MCF 10A (cell line): ENCODE measurements at regions of chr1 and their contacts with region 1.

Region 1: GRCh38 chr1:172507741-172508140 is 25.2 kb upstream of the SUCO start:
- DNase-seq: no peak
- H3K4me3 Mint-ChIP-seq: no peak overlapping the region
- H3K27ac Mint-ChIP-seq: no peak overlapping the region
- H3K4me1 Mint-ChIP-seq: no peaks in the 10 kb centered on the region
- H3K27me3 Mint-ChIP-seq: no peaks in the 10 kb centered on the region
- CTCF ChIP-seq: no peak

Region 2: DNA sequence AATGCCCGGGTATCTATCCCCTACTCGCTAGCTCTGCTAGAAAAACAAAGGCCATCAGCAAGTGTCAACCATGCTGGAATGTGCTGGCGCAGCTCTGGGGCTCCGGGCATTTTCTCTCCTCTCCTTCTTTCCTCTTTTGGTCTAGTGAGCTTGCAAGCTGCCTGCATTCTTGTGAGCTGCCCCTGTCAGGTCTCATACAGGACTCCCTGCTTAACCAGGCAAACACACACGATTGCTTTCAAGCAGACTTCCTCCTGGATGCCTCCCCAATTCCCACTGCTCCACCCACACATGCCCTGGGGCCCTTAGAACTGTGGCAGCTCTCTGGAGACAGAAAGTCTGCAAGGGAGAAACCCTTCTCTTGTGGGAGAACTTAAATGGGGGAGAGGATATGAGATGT is 10.5 kb before region 1 on chr1:
- CTCF ChIA-PET with region 1: interaction called, 10 read pairs
- POLR2A ChIA-PET with region 1: interaction called, 6 read pairs
- intact Hi-C with region 1: no loop called
- DNase-seq: peak; percentile 76
- H3K4me3 Mint-ChIP-seq: no peak overlapping the region
- H3K27ac Mint-ChIP-seq: no peak overlapping the region
- H3K4me1 Mint-ChIP-seq: peaks cover 12% of the 10 kb centered on the region
- H3K27me3 Mint-ChIP-seq: no peaks in the 10 kb centered on the region
- CTCF ChIP-seq: no peak